Left cardiac atrium (tissue), 4 donors: ENCODE measurements at regions of chr5 and their contacts with region 1.

Region 1: DNA sequence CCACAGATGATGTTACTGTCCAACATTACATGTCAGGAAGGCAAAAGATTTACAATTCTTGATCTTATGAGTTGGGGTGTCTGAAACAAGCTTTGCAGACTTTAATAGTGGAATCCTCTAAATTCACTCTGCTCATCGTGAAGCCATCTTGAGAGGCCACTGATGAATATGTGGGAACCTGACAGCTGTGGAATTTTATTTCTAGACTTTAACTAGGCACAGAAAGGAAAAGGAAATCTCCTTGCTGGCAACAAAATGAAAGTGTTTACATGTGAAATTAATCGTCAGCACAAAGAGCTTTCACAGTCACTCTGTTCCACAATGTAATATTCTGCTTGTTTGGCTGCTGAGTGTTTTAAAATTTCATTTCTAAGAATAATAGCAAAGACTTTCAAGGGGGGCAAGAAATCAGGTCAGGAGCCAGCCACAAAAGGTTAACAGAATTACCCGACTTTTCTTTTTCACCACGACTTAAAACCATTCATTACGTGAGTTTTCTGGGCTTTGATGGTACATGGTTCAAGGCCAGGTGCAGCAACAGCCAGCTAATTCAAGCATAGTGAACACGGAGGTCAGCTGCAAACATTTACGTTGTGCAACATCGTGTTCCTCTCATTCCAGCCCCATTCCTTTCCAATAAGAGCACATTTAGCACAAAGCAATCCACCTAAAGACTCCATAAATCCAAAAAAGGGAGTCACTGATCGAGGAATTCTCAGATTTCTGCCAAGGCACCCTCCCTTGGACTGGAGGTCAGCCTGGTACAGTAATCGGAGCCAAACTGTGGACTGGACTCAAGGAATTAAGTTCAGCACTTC is 14.6 kb downstream of the NREP start:
- DNase-seq: no peak
- ATAC-seq: peak; percentile 33 to 72

Region 2: GRCh38 chr5:111706345-111706744 is 36.0 kb before region 1 on chr5:
- intact Hi-C with region 1: loop called in 1 of 2 experiments (anchors 2 kb)
- DNase-seq: no peak
- ATAC-seq: peak; percentile 53 to 78

Region 3: GRCh38 chr5:111914966-111915636 is 172.7 kb after region 1 on chr5:
- intact Hi-C with region 1: no loop called
- DNase-seq: no peak
- ATAC-seq: no peak